ENCODE measurements at regions of chr18 and their contacts with region 1.

Region 1: DNA sequence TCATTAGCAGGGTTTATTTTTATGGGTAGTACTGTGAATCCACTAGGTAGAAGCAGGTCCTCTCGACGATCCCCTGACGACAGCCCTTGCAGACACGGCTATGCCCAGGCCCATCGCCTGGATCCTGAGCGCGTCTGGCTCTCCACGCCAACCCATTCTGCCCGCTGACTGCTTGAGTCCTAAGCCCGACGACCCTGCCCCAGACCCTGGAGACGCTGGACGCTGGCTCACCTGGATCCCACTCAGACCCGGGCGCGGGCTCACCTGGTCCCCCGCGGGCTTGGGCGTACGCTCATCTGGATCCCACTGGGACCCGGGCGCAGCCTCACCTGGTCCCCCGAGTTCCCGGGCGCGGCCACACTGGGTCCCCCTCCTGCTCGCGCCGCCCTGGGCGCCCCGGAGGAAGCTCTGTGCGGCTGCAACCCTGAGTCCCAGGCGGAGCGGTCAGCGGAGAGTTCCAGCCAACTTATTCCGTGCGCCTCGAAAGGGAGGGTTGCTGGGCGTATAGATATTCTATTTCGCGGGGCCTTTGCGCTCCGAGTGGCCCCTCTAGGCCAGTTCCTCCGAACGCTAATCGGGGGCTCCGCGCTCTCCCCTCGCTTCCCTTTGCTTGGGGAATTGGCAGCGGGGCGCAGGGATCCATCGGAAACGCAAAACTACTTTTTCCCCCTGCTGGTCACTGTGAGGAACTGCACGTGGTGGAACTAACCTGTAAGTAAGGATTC is 22.4 kb upstream of the RMP24 start:
- DNase-seq: peak; percentile 43
- ATAC-seq: peak; percentile 85
- H3K4me3 Mint-ChIP-seq: peak overlapping the region; percentile 82
- H3K27ac Mint-ChIP-seq: no peak overlapping the region
- H3K4me1 Mint-ChIP-seq: peaks cover 8% of the 10 kb centered on the region
- H3K27me3 Mint-ChIP-seq: peaks cover 27% of the 10 kb centered on the region
- CTCF ChIP-seq: peak; percentile 98

Region 2: DNA sequence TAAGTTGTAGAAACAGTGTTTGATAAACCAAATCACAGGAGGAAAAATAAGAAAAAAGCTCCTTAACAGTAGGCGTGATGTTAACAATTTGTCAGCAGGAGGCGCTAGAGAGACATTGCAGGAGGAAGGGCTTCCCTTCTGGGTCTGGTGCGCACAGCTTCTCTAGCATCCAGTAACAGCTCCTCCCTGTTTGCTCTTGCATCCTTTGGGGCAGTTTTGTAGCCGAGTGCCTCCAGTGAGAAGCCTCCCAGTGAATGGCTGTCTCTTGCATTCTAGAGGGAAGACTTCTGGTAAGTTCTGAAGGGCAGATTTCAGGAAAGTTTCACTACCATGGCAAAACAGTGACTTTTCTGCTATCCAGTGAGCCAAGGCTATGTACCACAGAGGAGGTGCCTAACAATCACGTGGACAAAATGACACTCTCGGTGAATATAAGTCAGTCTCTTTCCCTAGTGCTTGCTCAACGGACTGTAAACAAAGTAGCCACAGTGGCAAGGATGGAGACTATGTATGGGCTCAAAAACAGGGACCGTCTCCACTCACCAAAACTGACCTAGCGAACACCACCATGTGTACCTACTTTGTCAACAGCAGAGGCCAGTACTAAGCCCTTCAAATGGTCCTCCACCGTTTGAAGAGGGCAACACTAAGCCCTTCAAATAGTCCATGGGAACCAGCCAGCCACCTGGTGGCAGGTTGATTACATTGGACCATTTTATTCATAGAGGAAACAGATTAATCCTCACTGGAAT is 563.3 kb before region 1 on chr18:
- CTCF ChIA-PET with region 1: interaction called, 5 read pairs
- POLR2A ChIA-PET with region 1: no interaction called
- intact Hi-C with region 1: loop called (anchors 1 kb)
- DNase-seq: no peak
- ATAC-seq: peak; percentile 95
- H3K4me3 Mint-ChIP-seq: no peak overlapping the region
- H3K27ac Mint-ChIP-seq: no peak overlapping the region
- H3K4me1 Mint-ChIP-seq: peaks cover 6% of the 10 kb centered on the region
- H3K27me3 Mint-ChIP-seq: peaks cover 18% of the 10 kb centered on the region
- CTCF ChIP-seq: no peak

Region 3: DNA sequence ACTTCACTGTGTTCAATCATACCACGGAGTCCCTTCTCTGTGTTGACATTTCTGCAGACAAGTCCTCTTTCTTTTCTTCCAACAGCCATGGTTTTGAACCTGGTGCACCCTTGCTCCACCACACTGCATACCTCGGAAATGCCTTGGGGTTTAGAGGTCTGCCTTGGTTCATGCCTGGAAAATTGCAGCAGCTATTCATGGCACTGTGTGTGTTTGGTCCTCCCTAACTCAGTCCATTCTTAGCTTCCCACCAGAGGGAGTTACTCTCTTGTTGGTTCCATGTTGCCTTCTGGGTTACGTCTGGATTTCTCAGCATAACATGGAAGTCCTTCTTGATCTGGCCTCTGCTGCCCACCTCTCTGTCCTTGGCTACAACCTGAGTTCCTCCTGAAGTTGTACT is 553.4 kb after region 1 on chr18:
- CTCF ChIA-PET with region 1: no interaction called
- POLR2A ChIA-PET with region 1: no interaction called
- intact Hi-C with region 1: no loop called
- DNase-seq: no peak
- ATAC-seq: no peak
- H3K4me3 Mint-ChIP-seq: no peak overlapping the region
- H3K27ac Mint-ChIP-seq: no peak overlapping the region
- H3K4me1 Mint-ChIP-seq: no peaks in the 10 kb centered on the region
- H3K27me3 Mint-ChIP-seq: peaks cover 5% of the 10 kb centered on the region
- CTCF ChIP-seq: no peak